Activated CD4-positive, alpha-beta T cell treated with anti-CD3 and anti-CD28 coated beads, Interleukin-2, amount 10 ng/mL, durations not matched to agents 7 days and 5 days (primary cell): ENCODE measurements at regions of chr12 and their contacts with region 1.

Region 1: DNA sequence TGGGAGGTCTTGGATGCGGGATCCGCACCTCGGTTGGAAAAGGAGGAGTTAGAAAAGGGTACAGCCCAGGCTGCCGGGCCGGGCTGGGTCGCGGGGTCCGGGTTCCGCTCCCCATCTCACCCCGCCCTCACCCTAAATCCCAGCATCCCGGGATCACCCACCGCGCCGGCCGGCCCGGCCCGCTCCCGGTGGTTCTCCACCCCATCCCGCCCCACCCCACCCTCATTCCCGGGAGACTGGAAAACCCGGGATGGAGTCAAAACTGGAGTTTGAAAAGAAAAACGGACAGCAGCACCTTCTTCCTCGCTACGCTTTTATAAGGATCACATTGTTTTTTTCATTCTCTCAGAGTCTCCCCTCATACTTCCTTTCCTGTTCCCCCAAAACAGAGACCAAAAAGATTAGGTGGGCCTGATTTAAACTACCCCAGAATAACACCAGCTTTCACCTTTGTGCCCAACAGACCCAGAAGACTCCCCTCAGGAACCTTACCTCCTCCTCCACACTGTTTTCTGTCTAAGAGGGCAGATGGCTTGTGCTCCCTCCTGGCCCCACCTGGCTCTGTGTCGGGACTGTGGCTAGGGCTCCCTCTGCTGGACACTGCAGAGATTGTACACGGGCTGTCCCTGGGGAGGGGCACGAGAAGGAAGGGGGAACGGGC is 2.8 kb downstream of the GLI1 start:
- DNase-seq: peak; percentile 92
- H3K4me3 Mint-ChIP-seq: peak overlapping the region; percentile 76
- H3K27ac Mint-ChIP-seq: peak overlapping the region; percentile 54
- H3K4me1 Mint-ChIP-seq: peaks cover 55% of the 10 kb centered on the region
- H3K27me3 Mint-ChIP-seq: peaks cover 19% of the 10 kb centered on the region

Region 2: DNA sequence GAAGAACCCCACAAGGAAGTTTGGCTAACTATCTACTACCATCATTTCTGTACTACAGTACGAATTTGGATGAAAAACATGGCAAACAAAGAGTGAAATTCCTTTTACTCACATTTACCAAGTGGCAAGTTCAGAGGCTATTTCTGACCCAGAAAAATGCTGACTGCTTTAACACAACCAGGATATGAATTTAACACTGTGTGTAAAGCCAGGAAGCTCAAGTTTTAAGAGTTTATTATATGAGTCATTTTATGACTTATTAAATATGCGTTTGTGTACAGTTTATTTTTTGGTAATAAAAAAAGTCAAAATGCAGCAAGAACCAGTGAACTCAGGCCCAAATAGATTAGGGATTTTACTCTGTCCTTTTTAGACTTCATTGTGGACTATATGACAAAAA is 153.0 kb before region 1 on chr12:
- CTCF ChIA-PET with region 1: interaction called, 17 read pairs
- POLR2A ChIA-PET with region 1: no interaction called
- DNase-seq: no peak
- H3K4me3 Mint-ChIP-seq: no peak overlapping the region
- H3K27ac Mint-ChIP-seq: no peak overlapping the region
- H3K4me1 Mint-ChIP-seq: peaks cover 5% of the 10 kb centered on the region
- H3K27me3 Mint-ChIP-seq: no peaks in the 10 kb centered on the region

Region 3: DNA sequence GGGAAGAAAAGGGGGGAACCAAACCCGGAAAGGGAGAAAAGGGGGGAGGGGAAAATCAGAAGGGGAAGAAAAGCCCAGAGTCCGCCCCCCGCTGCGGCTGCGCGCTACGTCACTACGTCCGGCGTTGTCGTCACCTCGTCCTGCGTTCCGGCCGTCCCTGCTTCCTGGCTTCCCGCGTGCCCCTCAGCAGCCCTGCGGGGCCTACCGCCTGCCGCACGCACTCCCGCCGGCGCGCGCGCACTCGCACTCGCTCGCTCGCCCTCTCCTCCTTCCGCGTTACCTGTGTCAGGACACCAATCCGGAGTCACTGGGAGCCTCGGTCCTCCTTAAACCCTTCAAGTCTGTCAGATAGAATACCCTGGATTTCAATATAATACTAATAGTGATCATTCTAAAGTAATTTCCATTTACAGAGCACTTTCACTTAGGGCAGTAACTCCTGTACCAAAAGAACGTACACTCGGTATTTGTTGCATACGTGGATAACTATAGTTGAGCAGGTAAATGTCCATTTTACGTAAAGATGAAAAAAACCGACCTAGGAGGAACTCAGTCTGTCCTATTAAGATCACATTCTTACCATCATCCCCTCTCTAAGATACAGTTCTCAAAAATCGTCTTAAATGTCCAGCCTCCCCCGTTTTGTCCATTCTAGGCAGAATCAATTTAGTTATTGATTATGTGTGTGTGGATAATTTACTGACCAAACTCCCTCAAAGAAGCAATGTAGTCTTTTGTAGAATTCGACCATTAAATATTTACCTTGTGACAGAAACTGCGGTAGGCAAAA is 31.3 kb before region 1 on chr12 and contains the start of gene R3HDM2:
- CTCF ChIA-PET with region 1: interaction called, 28 read pairs
- POLR2A ChIA-PET with region 1: no interaction called
- DNase-seq: peak; percentile 95
- H3K4me3 Mint-ChIP-seq: peak within 1 kb of the TSS; percentile 100
- H3K27ac Mint-ChIP-seq: peak within 1 kb of the TSS; percentile 100
- H3K4me1 Mint-ChIP-seq: peaks cover 42% of the 10 kb centered on the region
- H3K27me3 Mint-ChIP-seq: no peaks in the 10 kb centered on the region
- total RNA-seq, gene R3HDM2: 71.6 to 74.5 TPM

Region 4: GRCh38 chr12:57441846-57442427 is 20.4 kb before region 1 on chr12:
- CTCF ChIA-PET with region 1: interaction called, 28 read pairs
- POLR2A ChIA-PET with region 1: no interaction called
- DNase-seq: no peak
- H3K4me3 Mint-ChIP-seq: no peak overlapping the region
- H3K27ac Mint-ChIP-seq: no peak overlapping the region
- H3K4me1 Mint-ChIP-seq: no peaks in the 10 kb centered on the region
- H3K27me3 Mint-ChIP-seq: peaks cover 11% of the 10 kb centered on the region

Region 5: DNA sequence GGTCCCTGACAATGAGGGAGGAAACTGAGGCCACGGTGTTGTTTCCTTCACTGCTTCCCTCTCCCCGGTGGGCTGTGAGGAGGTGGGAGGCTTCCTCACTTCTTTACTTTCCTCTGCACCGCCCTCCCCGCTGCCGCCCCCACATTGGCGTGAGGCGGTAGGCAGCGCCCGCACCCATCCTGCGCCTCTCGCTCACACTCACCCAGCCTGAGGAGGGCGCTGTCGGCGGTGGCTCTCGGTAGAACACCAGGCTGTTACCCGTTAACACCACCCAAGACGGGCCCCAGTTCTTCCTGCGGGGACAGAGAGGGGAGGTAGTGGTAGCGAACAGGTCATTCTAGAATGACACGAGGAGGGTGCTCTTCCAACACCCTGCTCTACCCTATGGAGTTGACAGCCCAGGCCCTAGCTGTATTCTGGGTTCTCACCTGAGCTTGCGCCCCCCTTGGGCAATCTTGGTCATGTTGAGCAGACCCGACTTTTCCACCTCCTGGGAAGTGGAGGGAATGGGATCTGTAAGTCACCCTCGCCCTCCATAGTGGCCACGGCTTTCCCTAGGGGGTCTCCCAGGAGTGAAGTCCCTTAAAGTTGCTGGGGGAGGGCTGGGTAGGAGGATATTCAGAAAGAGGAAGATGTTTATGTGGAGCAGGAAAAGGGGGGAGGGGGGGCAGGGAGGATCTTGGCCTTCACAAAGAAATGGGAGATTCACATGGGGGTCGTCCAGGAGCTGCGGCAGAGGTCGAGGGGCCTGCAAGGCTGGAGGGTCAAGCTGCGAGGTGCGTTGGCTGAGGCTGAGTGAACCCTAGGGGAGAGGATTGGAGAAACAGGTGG is 14.0 kb after region 1 on chr12:
- CTCF ChIA-PET with region 1: interaction called, 23 read pairs
- POLR2A ChIA-PET with region 1: no interaction called
- DNase-seq: peak; percentile 80
- H3K4me3 Mint-ChIP-seq: peak overlapping the region; percentile 91
- H3K27ac Mint-ChIP-seq: peak overlapping the region; percentile 93
- H3K4me1 Mint-ChIP-seq: peaks cover 69% of the 10 kb centered on the region
- H3K27me3 Mint-ChIP-seq: no peaks in the 10 kb centered on the region